ENCODE measurements at regions of chr13 and their contacts with region 1.

Region 1: GRCh38 chr13:98476538-98476966 is 100.4 kb downstream of the STK24 start:
- DNase-seq: peak; percentile 71
- ATAC-seq: peak; percentile 80 to 90
- H3K4me3 ChIP-seq: no peak overlapping the region
- H3K27ac ChIP-seq: peak overlapping the region; percentile 60
- H3K4me1 ChIP-seq: peaks cover 54% of the 10 kb centered on the region
- H3K27me3 ChIP-seq: no peaks in the 10 kb centered on the region
- CTCF ChIP-seq: no peak

Region 2: DNA sequence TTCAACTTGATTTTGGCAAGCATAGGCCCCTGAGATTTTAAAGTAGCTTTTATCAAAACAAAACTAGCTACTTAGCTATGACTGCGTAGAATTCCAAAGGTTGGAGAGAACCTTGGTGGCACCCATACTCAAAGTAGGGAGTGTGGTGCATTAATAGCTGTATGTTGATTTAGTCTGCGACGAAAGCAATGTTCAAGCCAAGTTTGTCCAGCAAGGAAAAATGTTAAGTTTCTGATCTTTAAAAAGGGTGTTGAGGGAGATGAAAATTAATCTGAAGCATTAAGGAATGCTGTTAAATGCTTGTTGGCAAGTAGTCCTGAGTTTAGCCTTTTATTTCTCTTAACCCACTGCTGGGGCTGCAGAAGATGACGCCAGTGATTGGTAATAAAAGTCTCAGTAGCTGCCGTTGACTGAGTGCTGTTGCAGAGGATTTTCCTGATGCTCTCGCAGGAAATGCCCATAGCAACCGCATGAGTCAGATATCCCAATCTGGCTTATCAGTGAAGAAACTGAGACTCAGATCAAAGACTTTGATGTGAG is 223.6 kb before region 1 on chr13:
- intact Hi-C with region 1: no loop called
- DNase-seq: no peak
- ATAC-seq: peak; percentile 91 to 92
- H3K4me3 ChIP-seq: no peak overlapping the region
- H3K27ac ChIP-seq: peak overlapping the region; percentile 70
- H3K4me1 ChIP-seq: peaks cover 25% of the 10 kb centered on the region
- H3K27me3 ChIP-seq: no peaks in the 10 kb centered on the region
- CTCF ChIP-seq: no peak

Region 3: DNA sequence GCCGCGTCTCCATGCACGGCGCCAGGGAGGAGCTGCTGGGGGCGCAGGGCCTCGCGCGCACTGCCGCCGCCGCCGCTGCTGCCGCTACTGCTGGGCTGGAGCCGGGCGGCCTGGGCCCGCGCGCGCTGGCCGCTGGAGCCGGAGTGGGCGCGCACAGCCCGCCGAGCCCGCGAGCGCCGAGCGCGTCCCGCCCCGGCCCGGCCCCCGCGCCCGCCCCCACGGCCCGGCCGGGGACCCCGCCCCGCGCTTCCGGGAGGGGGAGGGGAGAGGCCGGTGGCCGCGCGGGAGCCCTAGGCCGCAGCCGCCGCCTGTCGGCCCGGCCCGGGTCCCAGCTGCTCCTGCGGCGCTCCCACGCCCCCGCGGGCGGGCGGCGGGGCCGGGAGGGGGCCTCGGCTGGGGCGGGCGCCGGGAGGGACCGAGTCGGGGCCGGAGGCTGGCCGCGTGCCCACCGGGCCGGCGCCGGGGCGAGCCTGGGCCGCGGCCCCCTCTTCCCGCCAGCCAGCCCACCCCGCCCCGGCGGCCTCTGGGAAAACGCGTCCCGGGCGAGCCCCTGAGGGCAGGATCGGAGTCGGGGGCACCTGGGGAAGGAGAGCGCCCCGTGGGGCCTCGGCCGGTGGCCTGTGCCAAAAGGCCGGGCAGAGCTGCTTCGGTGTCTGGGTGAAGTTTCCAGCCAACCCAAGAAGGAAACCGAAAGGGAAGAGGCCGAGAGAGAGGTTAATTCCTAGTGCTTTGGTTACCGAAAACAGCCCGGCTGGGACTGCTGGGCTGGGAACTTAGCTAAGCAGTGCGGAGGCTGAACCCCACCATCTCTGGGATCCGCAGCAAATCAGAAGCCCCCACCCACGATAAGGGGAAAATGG is 100.6 kb after region 1 on chr13 and contains the start of gene STK24:
- intact Hi-C with region 1: loop called (anchors 10 kb)
- DNase-seq: peak; percentile 75
- ATAC-seq: peak; percentile 77 to 89
- H3K4me3 ChIP-seq: peak within 1 kb of the TSS; percentile 84
- H3K27ac ChIP-seq: peak within 1 kb of the TSS; percentile 96
- H3K4me1 ChIP-seq: peaks cover 54% of the 10 kb centered on the region
- H3K27me3 ChIP-seq: no peaks in the 10 kb centered on the region
- CTCF ChIP-seq: no peak
- total RNA-seq, gene STK24: 94.5 TPM

Measured in lower lobe of right lung (tissue), 2 donors.